Caco-2 (cell line): ENCODE measurements at regions of chr16 and their contacts with region 1.

Region 1: GRCh38 chr16:50024684-50025536 is at the start of gene CNEP1R1:
- DNase-seq: peak; percentile 97 to 98
- H3K4me3 ChIP-seq: peak within 1 kb of the TSS; percentile 82
- H3K4me3 Mint-ChIP-seq: peak within 1 kb of the TSS; percentile 97
- H3K27ac Mint-ChIP-seq: peak within 1 kb of the TSS; percentile 75
- H3K4me1 ChIP-seq: peaks cover 12% of the 10 kb centered on the region
- H3K4me1 Mint-ChIP-seq: peaks cover 12% of the 10 kb centered on the region
- H3K27me3 ChIP-seq: no peaks in the 10 kb centered on the region
- H3K27me3 Mint-ChIP-seq: peaks cover 2% of the 10 kb centered on the region
- CTCF ChIP-seq: peak; percentile 98 to 100
- total RNA-seq, gene CNEP1R1: 34.5 and 39.4 TPM in 2 replicates

Region 2: GRCh38 chr16:49959563-49960282 is 65.2 kb before region 1 on chr16:
- CTCF ChIA-PET with region 1: interaction called, 21 read pairs
- POLR2A ChIA-PET with region 1: no interaction called
- intact Hi-C with region 1: loop called (anchors 5 kb)
- DNase-seq: no peak
- H3K4me3 ChIP-seq: no peak overlapping the region
- H3K4me3 Mint-ChIP-seq: no peak overlapping the region
- H3K27ac Mint-ChIP-seq: no peak overlapping the region
- H3K4me1 ChIP-seq: no peaks in the 10 kb centered on the region
- H3K4me1 Mint-ChIP-seq: peaks cover 1% of the 10 kb centered on the region
- H3K27me3 ChIP-seq: no peaks in the 10 kb centered on the region
- H3K27me3 Mint-ChIP-seq: peaks cover 3% of the 10 kb centered on the region
- CTCF ChIP-seq: no peak

Region 3: DNA sequence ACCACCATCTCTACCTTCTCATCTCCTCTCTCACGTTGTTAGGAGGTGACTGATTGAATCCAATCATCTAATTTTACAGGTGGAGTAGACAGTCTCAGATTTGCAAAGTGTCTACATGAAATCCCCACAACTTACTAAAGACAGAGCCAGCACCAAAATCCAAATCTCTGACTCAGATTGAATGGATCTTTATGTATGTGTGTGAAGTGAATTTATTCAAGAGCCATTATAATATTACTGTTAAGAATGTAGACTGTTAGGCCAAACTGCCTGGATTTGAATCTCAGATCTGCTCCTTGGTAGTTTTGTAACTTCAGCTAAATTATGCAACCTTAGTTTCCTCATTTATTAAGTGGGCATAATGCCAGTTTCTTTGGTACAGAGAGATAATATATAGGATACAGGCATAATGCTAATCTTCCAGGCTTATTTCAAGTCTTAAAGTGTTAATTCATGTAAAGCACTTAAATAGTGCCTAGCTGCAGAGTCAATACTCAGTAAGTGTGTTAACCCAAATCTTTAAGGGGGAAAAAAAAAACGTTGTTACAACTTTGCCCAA is 12.8 kb after region 1 on chr16:
- CTCF ChIA-PET with region 1: interaction called, 24 read pairs
- POLR2A ChIA-PET with region 1: interaction called, 3 read pairs
- intact Hi-C with region 1: loop called (anchors 1 kb)
- DNase-seq: no peak
- H3K4me3 ChIP-seq: no peak overlapping the region
- H3K4me3 Mint-ChIP-seq: peak overlapping the region; percentile 2
- H3K27ac Mint-ChIP-seq: no peak overlapping the region
- H3K4me1 ChIP-seq: peaks cover 58% of the 10 kb centered on the region
- H3K4me1 Mint-ChIP-seq: peaks cover 33% of the 10 kb centered on the region
- H3K27me3 ChIP-seq: no peaks in the 10 kb centered on the region
- H3K27me3 Mint-ChIP-seq: no peaks in the 10 kb centered on the region
- CTCF ChIP-seq: no peak

Region 4: DNA sequence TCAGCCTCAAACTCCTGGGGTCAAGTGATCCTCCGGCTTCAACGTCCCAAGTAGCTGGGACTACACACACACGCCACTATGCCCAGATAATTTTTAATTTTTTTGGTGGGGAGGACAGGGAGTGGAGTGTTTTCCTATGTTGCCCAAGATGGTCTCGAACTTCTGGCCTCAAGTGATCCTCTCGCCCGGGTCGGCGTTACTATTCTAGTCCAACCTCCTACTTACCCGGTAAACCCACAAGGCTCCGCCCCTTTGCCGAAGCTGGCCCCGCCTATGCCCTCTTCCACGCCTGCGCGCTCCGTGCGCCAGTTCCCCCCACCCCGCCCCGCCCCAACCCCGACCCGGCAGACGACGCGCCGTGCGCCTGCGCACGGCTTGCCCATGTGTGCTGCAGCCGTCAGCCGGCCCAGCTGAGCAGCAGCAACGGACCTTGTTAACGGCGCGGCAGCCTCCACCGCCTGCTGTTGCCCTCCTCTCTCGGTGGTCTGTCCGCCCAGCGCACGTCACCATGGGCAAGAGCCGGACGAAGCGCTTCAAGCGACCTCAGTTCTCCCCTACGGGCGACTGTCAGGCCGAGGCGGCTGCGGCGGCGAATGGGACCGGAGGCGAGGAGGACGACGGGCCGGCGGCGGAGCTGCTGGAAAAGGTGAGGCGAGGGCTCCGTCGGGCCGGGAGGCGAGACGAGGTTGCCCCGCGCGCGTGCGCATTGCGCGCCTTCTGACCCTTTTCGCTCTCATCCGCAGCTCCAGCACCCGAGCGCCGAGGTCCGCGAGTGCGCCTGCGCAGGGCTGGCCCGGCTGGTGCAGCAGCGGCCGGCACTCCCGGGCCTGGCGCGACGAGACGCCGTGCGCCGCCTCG is 40.9 kb after region 1 on chr16 and contains the start of gene HEATR3:
- CTCF ChIA-PET with region 1: interaction called, 58 read pairs
- POLR2A ChIA-PET with region 1: interaction called, 18 read pairs
- intact Hi-C with region 1: loop called (anchors 1 kb)
- DNase-seq: peak; percentile 96 to 97
- H3K4me3 ChIP-seq: peak within 1 kb of the TSS; percentile 86
- H3K4me3 Mint-ChIP-seq: peak within 1 kb of the TSS; percentile 94
- H3K27ac Mint-ChIP-seq: peak within 1 kb of the TSS; percentile 88
- H3K4me1 ChIP-seq: 0 out of 2 replicates have a peak, but pooled peaks cover 3% of the 10 kb centered on the region
- H3K4me1 Mint-ChIP-seq: peaks cover 19% of the 10 kb centered on the region
- H3K27me3 ChIP-seq: no peaks in the 10 kb centered on the region
- H3K27me3 Mint-ChIP-seq: no peaks in the 10 kb centered on the region
- CTCF ChIP-seq: no peak
- total RNA-seq, gene HEATR3: 41.6 and 42.8 TPM in 2 replicates

Region 5: DNA sequence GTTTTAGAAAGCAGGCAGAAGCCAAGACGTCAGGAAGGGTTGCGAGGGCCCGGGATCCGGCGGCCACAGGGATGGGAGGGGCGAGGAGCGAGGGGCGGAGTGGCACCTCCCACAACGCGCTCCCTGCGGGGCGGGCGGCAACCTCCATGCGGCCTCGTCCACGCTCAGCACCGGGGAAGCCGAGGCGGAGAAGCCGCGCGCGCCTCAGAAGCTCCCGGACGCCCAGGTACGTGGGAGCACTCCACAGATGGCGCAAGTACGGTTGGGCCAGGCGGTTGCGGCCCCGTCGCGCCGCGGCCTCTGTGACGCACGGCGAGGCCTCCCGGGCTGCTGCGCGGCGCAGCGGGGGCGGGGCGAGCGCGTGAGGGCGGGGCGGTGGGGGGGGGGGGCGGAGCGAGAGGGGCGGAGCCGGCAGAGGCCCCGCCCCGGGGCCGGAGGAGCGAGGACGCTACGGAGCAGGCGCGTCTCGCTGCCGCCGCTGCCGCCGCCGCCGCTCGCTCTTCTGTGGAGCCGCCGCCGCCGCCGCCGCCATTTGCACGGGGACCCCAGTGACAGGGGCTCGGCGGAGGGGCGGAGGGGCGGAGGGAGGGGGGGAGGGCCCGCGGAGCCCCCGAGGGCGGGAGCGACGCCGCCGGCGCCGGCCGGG is 128.0 kb after region 1 on chr16 and contains the start of gene TENT4B:
- CTCF ChIA-PET with region 1: interaction called, 9 read pairs
- POLR2A ChIA-PET with region 1: no interaction called
- intact Hi-C with region 1: loop called (anchors 1 kb)
- DNase-seq: peak; percentile 90 to 92
- H3K4me3 ChIP-seq: peak within 1 kb of the TSS; percentile 97
- H3K4me3 Mint-ChIP-seq: peak within 1 kb of the TSS; percentile 78
- H3K27ac Mint-ChIP-seq: peak within 1 kb of the TSS; percentile 87
- H3K4me1 ChIP-seq: peaks cover 16% of the 10 kb centered on the region
- H3K4me1 Mint-ChIP-seq: peaks cover 15% of the 10 kb centered on the region
- H3K27me3 ChIP-seq: no peaks in the 10 kb centered on the region
- H3K27me3 Mint-ChIP-seq: no peaks in the 10 kb centered on the region
- CTCF ChIP-seq: no peak
- total RNA-seq, gene TENT4B: 28.6 and 29.3 TPM in 2 replicates

Region 6: GRCh38 chr16:50202926-50203624 is 178.2 kb after region 1 on chr16:
- CTCF ChIA-PET with region 1: interaction called, 16 read pairs
- POLR2A ChIA-PET with region 1: no interaction called
- intact Hi-C with region 1: no loop called
- DNase-seq: peak; percentile 52 to 77
- H3K4me3 ChIP-seq: no peak overlapping the region
- H3K4me3 Mint-ChIP-seq: peak overlapping the region; percentile 23
- H3K27ac Mint-ChIP-seq: peak overlapping the region; percentile 94
- H3K4me1 ChIP-seq: peaks cover 42% of the 10 kb centered on the region
- H3K4me1 Mint-ChIP-seq: peaks cover 34% of the 10 kb centered on the region
- H3K27me3 ChIP-seq: no peaks in the 10 kb centered on the region
- H3K27me3 Mint-ChIP-seq: no peaks in the 10 kb centered on the region
- CTCF ChIP-seq: no peak

Region 7: DNA sequence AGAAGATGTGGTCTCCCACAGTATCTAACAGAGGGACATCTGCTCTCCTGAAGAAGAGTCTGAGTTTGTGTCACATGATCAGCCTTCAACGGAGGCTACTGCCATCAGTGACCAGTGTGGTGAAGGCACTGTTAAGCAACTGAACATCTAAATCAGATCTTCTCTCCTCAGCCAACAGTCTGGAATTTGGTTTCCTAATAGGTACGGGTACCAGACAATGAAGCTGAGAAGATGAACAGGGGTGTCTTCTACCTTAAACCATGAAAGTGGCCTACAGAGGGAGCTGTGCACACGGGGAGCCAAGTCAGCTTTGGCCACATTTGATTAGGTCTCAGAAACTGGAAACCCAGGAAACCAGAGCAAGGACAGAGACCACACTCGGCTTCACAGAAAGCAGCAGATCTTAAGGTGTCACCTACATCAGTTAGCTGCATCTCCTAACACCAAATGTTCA is 302.1 kb after region 1 on chr16:
- CTCF ChIA-PET with region 1: no interaction called
- POLR2A ChIA-PET with region 1: no interaction called
- intact Hi-C with region 1: loop called (anchors 10 kb)
- DNase-seq: peak in 1 of 2 experiments; percentile 53
- H3K4me3 ChIP-seq: no peak overlapping the region
- H3K4me3 Mint-ChIP-seq: no peak overlapping the region
- H3K27ac Mint-ChIP-seq: no peak overlapping the region
- H3K4me1 ChIP-seq: peaks cover 14% of the 10 kb centered on the region
- H3K4me1 Mint-ChIP-seq: peaks cover 30% of the 10 kb centered on the region
- H3K27me3 ChIP-seq: no peaks in the 10 kb centered on the region
- H3K27me3 Mint-ChIP-seq: no peaks in the 10 kb centered on the region
- CTCF ChIP-seq: peak; percentile 57 to 76